ENCODE measurements at regions of chr22 and their contacts with region 1.

Region 1: GRCh38 chr22:36528795-36529751 is at the start of gene EIF3D:
- DNase-seq: peak; percentile 98
- H3K4me3 ChIP-seq: peak within 1 kb of the TSS; percentile 46 to 59
- H3K27ac ChIP-seq: peak within 1 kb of the TSS; percentile 89 to 90
- H3K4me1 ChIP-seq: no peaks in the 10 kb centered on the region
- H3K27me3 ChIP-seq: no peaks in the 10 kb centered on the region
- CTCF ChIP-seq: peak in 1 of 4 experiments; percentile 8
- POLR2A ChIP-seq: peak; percentile 70
- total RNA-seq, gene EIF3D: 241 to 364 TPM

Region 2: DNA sequence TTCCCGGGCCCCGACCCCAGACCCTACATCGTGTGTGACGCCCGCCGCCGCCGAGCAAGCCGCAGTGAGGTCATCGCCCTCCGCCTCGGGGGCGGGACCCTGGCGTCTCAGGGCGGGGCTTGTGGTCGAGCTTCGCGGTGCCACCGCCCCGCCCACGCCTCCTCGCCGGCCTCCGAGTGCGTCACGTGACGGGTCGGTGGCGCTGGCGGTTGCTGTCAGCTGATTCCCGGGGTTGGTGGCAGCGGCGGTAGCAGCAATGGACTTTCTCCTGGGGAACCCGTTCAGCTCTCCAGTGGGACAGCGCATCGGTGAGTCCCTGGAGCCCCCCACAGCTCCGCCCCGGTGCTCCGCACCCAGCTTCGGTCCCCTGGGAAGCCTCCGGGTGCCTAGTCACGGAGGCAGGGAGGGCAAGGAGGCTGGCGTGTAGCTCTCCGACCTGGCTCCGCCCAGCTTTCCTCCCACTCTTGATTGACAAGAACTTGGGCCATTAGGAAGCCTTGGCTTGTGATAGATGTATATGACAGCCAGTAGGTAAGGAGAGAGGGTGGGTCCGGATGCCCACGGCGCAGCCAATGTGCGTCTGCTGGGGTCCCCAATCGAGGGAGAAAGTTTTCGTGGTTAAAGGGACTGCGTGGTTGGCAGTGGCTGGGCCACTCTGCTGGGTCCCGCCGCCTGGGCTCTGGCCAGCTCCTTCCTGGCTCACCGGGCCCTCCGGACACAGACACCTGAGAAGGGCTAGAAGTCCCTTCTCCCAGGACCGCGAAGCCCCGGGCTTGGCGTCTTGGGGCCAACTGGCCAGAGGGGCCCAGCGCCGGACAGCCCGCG is 1229.2 kb before region 1 on chr22 and contains the start of gene TOM1:
- intact Hi-C with region 1: loop called (anchors 10 kb)
- DNase-seq: peak; percentile 96
- H3K4me3 ChIP-seq: peak within 1 kb of the TSS; percentile 59 to 73
- H3K27ac ChIP-seq: peak within 1 kb of the TSS; percentile 94
- H3K4me1 ChIP-seq: no peaks in the 10 kb centered on the region
- H3K27me3 ChIP-seq: no peaks in the 10 kb centered on the region
- CTCF ChIP-seq: peak in 1 of 4 experiments; percentile 17
- POLR2A ChIP-seq: peak; percentile 92
- total RNA-seq, gene TOM1: 65.6 to 68.6 TPM

Region 3: DNA sequence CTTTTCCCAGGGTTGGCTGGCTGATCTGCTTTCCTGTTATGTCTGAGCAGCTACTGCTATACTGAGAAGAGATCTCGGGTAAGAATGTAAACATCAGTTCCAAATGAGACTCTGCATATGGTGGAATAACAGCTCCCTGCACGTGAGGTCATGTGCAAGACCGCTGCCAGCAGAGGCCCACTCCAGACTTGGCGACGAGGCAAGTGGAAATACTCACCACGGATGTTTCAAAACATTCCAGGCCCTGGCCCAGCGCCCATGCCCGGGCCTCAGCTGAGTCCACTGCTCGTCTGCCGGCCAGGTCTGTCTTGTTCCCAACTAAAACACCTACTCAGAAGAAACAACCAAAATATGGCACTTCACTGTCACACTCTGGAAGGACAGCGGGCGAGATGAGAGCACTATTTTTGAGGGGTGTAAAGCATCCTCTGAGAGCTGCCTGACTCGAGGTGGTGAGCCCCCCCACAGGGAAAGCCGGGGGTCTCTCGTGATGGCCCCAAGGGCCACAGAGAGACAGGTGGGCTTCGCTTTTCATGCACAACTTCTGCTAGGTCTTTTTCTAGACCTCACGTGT is 233.7 kb after region 1 on chr22:
- intact Hi-C with region 1: loop called (anchors 10 kb)
- DNase-seq: no peak
- H3K4me3 ChIP-seq: no peak overlapping the region
- H3K27ac ChIP-seq: no peak overlapping the region
- H3K4me1 ChIP-seq: no peaks in the 10 kb centered on the region
- H3K27me3 ChIP-seq: no peaks in the 10 kb centered on the region
- CTCF ChIP-seq: no peak
- POLR2A ChIP-seq: no peak

Measured in prostate gland (tissue), 2 donors.